Posterior vena cava (tissue), 2 donors: ENCODE measurements at regions of chr10 and their contacts with region 1.

Region 1: GRCh38 chr10:122648599-122649428 is 50.8 kb downstream of the C10orf120 start:
- DNase-seq: no peak

Region 2: DNA sequence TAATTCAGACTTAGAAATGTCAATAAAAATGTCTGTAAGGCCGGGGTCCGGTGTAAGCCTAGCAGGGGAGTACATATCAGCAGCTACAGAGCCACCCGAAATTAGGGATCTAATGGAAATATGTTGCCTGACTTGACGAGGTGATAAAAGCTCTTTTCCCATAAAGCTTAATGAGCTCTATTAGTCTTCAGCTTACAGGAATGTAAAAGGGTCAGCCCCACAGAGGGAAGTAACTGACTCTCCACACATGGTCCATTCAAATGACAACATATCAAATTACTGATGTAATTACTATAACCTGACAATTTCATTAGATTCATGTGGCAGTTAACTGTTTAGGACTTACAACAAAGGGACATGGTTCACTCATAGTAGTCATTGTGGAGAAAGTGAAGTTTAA is 783.3 kb before region 1 on chr10:
- intact Hi-C with region 1: no loop called
- DNase-seq: no peak

Region 3: GRCh38 chr10:122703439-122704118 is 54.8 kb after region 1 on chr10:
- intact Hi-C with region 1: loop called in 1 of 2 experiments (anchors 2 kb)
- DNase-seq: peak; percentile 91

Region 4: DNA sequence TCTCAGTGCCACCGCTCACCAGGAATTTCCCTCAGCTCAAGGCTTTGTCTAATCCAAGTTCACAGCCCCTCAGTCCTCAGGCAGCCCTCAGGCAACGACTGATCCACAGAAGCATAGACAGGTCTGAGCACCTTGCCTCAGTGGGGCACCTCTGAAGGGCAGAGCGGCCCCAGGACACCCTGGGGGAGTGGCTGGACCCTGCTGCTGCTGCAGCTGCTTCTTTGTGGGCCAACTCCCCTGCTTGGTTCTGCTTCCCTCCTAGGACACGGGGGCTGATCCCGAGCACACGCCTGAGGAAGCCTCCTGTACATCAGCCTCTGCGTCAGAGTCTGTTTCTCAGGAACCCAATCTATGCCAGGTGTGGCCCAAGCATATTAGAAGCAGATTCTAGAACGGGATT is 180.6 kb after region 1 on chr10:
- intact Hi-C with region 1: no loop called
- DNase-seq: no peak